Prostate gland (tissue), 2 donors: ENCODE measurements at regions of chr1 and their contacts with region 1.

Region 1: DNA sequence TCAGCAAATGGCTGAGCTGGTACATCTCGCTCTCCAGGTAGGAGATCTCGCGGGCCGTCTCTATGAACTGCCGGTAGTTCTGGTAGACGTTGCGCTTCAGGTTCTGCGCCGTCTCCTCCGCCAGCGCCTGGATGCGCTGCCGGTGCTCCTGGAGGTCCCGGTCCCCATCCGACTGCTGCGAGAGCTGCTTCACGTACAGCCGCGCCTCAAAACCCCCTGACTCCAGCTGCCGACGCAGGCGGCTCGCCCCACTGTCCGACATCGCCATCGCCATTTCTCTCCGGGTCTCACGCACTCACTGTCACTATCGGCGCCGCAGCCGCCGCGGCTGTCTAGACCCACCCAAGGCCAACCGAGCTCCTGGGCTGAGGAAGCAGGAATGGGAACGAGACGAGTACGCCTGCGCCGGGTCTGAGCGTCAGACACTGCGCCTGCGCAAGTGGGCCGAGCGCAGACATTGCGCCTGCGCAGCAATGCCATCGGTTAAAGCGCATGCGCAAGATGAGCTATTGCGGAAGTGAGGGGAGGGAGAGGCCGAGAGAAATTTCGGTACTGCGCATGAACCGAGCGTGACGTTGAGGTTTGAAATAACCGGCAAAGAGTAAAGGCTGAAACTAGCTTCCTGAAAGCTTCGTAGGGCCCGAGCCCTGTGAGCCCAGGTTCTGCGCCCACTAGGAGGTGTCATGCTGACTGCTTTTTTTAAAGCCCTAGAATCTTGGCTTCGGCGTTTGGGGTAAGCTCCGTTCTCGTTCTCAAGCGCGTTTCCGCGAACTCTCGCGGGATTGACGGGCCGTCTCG is at the start of gene EXOC8:
- DNase-seq: peak; percentile 92
- H3K4me3 ChIP-seq: peak within 1 kb of the TSS; percentile 70 to 77
- H3K27ac ChIP-seq: peak within 1 kb of the TSS; percentile 76 to 87
- H3K4me1 ChIP-seq: peaks cover 7% of the 10 kb centered on the region
- H3K27me3 ChIP-seq: no peaks in the 10 kb centered on the region
- CTCF ChIP-seq: peak in 1 of 4 experiments; percentile 37
- POLR2A ChIP-seq: peak; percentile 86
- total RNA-seq, gene EXOC8: 11.9 to 14.8 TPM

Region 2: GRCh38 chr1:231240883-231241735 is 96.6 kb before region 1 on chr1 and contains the start of gene GNPAT:
- intact Hi-C with region 1: loop called (anchors 5 kb)
- DNase-seq: peak; percentile 82
- H3K4me3 ChIP-seq: peak within 1 kb of the TSS; percentile 60 to 75
- H3K27ac ChIP-seq: peak within 1 kb of the TSS; percentile 76 to 78
- H3K4me1 ChIP-seq: no peaks in the 10 kb centered on the region
- H3K27me3 ChIP-seq: no peaks in the 10 kb centered on the region
- CTCF ChIP-seq: peak in 1 of 4 experiments; percentile 23
- POLR2A ChIP-seq: peak; percentile 59
- total RNA-seq, gene GNPAT: 40.6 to 45.2 TPM

Region 3: GRCh38 chr1:231528172-231529029 is 190.7 kb after region 1 on chr1 and contains the start of gene TSNAX:
- intact Hi-C with region 1: loop called (anchors 5 kb)
- DNase-seq: peak; percentile 83
- H3K4me3 ChIP-seq: peak within 1 kb of the TSS; percentile 55 to 82
- H3K27ac ChIP-seq: peak within 1 kb of the TSS; percentile 90 to 91
- H3K4me1 ChIP-seq: no peaks in the 10 kb centered on the region
- H3K27me3 ChIP-seq: no peaks in the 10 kb centered on the region
- CTCF ChIP-seq: peak in 1 of 4 experiments; percentile 6
- POLR2A ChIP-seq: peak; percentile 77
- total RNA-seq, gene TSNAX: 23.5 to 41.2 TPM